Activated T-helper 2 cell treated with anti-CD3 and anti-CD28 coated beads, Interferon-gamma antibody, Interleukin-2, Interleukin-4, amounts not matched to agents 10 μg/mL and 5 μg/mL and 100 μg/mL, durations not matched to agents 14 hours and 24 hours and 36 hours (primary cell): ENCODE measurements at regions of chr13 and their contacts with region 1.

Region 1: GRCh38 chr13:33678906-33679657 is 138.9 kb upstream of the RFC3 start:
- DNase-seq: peak; percentile 53
- H3K4me3 Mint-ChIP-seq: peak overlapping the region; percentile 76
- H3K27ac Mint-ChIP-seq: peak overlapping the region; percentile 91
- H3K4me1 Mint-ChIP-seq: peaks cover 46% of the 10 kb centered on the region
- H3K27me3 Mint-ChIP-seq: no peaks in the 10 kb centered on the region

Region 2: DNA sequence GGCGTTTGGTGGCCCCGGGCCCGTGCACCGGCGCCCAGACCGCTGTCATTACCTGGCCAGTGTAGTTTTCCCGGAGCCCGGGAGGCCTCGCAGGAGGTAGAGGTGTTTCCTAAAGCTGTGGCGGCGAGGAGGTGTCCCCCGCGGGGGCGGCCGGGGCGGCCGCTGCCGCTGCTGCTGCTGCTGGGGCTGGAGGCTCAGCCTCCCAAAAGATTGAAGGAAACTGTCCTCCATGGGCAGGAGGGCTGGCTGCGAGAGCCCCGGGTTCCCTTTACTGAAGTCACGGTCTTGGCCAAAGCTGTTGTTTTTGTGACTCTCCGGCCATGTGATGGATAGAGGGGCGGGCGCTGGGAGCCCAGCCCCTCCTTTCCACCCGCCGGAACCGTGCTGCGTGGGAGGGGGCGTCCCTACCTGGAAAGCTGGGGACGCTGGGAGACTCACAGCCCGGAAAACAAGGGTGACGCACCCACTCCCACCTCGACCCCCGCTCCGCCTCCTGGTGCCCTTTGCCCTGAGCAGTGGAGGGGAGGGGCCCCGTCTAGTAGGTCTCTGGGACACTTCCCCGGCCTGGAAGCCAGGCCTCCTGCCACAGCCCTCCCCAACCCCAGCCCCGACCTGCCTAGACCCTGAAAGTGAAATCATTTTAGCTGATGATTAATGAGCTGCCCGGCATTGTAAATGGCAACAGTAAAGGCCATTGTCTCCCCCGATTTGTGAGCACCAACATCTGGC is 1251.1 kb before region 1 on chr13 and contains the start of gene N4BP2L1:
- intact Hi-C with region 1: loop called (anchors 2 kb)
- DNase-seq: peak; percentile 76
- H3K4me3 Mint-ChIP-seq: peak within 1 kb of the TSS; percentile 98
- H3K27ac Mint-ChIP-seq: peak within 1 kb of the TSS; percentile 100
- H3K4me1 Mint-ChIP-seq: peaks cover 39% of the 10 kb centered on the region
- H3K27me3 Mint-ChIP-seq: no peaks in the 10 kb centered on the region
- total RNA-seq, gene N4BP2L1: 26.1 and 28.6 TPM in 2 replicates

Region 3: DNA sequence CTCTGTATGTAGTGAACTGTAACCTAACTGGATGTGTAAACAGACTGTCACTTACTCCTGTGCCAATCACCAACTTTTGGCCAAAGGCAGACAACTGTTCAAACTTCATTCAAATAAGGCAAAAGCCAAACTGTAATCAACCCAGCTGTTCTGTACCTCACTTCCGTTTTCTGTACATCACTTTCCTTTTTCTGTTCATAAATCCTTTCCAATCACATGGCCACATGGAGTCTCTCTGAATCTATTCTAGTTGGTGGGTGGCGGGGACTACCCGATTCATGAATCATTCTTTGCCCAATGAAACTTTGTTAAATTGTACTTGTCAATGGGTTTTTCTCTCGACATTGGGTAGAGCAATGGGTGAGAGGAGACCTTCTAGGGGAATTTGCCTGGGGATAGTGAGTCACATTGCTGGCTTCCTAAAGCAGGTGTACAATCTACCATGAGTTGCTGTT is 39.4 kb before region 1 on chr13:
- intact Hi-C with region 1: loop called (anchors 1 kb)
- DNase-seq: no peak
- H3K4me3 Mint-ChIP-seq: no peak overlapping the region
- H3K27ac Mint-ChIP-seq: peak overlapping the region; percentile 80
- H3K4me1 Mint-ChIP-seq: peaks cover 48% of the 10 kb centered on the region
- H3K27me3 Mint-ChIP-seq: no peaks in the 10 kb centered on the region

Region 4: DNA sequence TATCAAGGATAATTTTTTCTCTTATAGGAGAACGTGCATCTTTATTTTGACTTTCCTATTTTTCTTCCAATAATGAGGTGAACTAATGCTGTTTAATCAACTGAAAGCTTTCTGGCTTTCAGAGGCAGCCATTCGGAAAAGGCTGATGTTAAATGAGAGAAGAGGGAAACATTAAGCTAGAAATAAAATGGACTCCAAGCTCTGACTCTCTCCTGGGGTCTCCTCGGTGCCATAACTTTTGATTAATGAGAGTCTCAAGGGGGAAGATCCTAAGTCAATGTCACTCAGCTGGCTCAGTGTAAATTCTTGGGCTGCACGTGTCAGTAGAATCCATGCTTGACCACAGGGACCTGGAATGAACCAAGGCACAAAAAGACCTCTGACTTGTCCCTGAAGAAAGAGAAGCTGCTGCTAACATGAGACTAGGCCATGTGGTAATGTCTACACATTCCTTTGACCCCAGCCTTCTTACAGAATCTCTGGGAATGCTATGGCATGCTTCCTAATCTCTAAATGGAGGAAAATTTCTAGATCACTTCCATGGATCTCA is 13.4 kb before region 1 on chr13:
- intact Hi-C with region 1: loop called (anchors 1 kb)
- DNase-seq: no peak
- H3K4me3 Mint-ChIP-seq: no peak overlapping the region
- H3K27ac Mint-ChIP-seq: no peak overlapping the region
- H3K4me1 Mint-ChIP-seq: peaks cover 20% of the 10 kb centered on the region
- H3K27me3 Mint-ChIP-seq: no peaks in the 10 kb centered on the region

Region 5: DNA sequence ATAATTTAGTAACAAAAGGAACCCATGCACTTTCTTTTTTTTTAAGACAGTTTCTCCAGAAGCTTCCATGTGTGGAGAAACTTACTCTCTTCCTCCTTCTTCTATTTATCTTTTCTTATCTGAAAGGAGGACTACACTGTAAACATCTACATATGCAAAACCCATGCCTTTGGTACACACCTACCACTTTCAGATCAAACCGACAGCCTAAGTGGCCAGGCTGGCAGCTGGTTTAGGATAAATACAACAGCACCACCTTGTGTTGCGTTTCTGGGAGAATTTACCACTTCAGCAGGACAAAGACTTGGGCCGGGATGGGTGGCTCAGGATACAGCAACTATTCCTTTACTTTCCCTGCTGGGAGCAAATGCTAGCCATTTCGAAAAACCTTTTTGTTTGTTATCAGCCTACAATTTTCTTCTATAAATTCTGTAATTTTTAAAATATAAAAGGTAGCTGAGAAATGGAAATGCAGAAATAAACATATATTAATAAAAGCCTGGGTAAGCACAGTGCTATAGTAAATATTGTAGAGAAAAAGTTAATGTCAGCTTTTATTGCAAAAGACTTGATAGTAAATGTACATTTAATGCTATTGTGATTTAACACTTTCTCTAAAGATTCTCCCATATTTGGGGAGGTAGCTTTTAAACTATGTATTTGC is 44.8 kb after region 1 on chr13:
- intact Hi-C with region 1: loop called (anchors 1 kb)
- DNase-seq: peak; percentile 56
- H3K4me3 Mint-ChIP-seq: no peak overlapping the region
- H3K27ac Mint-ChIP-seq: peak overlapping the region; percentile 80
- H3K4me1 Mint-ChIP-seq: peaks cover 34% of the 10 kb centered on the region
- H3K27me3 Mint-ChIP-seq: no peaks in the 10 kb centered on the region

Region 6: DNA sequence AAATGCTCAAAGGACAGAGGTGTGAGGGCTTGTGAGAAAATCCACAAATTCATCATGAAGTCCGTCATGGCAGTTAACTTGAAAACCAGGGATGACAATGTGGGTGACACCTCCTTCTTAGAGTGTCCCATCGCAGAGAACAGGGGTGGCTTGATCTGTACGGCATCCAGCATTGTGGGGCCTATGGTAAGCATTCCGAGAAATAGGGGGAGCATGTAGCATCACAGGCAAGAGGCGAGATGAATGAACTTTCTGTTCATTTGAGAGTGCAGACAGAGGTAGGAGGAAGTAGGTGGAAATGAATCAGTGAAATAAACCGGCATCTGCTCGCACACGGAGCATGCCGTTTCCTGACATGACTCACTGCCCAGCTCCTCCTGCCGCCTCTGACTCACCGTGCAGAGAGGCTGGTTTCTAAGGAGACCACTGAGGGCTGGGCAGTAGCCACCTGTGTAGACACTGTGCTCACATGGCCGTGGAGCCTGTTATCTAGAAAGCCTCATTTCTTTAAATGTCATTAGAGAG is 477.8 kb after region 1 on chr13:
- intact Hi-C with region 1: loop called (anchors 1 kb)
- DNase-seq: peak; percentile 67
- H3K4me3 Mint-ChIP-seq: peak overlapping the region; percentile 70
- H3K27ac Mint-ChIP-seq: peak overlapping the region; percentile 90
- H3K4me1 Mint-ChIP-seq: peaks cover 38% of the 10 kb centered on the region
- H3K27me3 Mint-ChIP-seq: peaks cover 17% of the 10 kb centered on the region